ENCODE measurements at regions of chr3 and their contacts with region 1.

Region 1: GRCh38 chr3:171829841-171830517 is 13.2 kb upstream of the TMEM212 start:
- DNase-seq: no peak
- H3K4me3 Mint-ChIP-seq: no peak overlapping the region
- H3K27ac Mint-ChIP-seq: no peak overlapping the region
- H3K4me1 Mint-ChIP-seq: no peaks in the 10 kb centered on the region
- H3K27me3 Mint-ChIP-seq: peaks cover 12% of the 10 kb centered on the region

Region 2: DNA sequence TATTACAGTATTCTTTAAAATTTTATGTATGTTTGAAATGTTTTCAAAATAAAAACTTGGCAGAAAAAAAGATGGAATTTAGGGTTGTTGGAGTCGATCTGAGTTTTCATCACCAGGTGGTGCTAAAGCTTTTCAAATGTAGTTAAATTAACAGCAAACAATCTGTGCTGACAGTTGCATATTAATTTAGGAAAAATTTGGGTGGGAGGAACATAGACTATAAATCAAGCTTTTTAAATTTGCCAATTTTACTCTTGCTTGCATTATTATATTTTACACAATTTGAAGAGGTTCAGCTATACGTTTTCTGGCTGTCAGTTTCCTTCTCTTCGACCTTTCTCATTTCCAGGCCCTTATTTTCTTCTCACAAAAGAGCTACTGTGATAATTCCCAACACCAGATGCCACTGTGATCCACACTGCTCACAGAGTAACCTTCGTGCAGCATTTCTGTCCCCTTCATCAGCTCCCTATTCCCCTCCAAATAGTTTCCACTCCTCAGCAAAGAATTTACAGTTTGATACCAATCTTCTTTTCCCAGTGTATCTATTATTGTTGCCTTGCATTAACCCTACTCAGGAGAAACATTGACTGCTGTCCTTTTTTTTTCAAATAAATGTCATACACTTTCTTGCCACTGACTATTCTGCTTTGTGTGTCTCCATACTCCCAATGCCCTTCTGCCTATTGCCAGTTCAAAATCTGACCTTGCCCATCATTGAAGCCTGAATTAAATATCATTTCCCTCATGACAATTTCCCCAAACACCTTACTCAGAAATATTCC is 868.2 kb before region 1 on chr3:
- CTCF ChIA-PET with region 1: interaction called, 3 read pairs
- intact Hi-C with region 1: loop called (anchors 5 kb)
- DNase-seq: peak; percentile 21
- H3K4me3 Mint-ChIP-seq: no peak overlapping the region
- H3K27ac Mint-ChIP-seq: no peak overlapping the region
- H3K4me1 Mint-ChIP-seq: no peaks in the 10 kb centered on the region
- H3K27me3 Mint-ChIP-seq: peaks cover 3% of the 10 kb centered on the region

Region 3: DNA sequence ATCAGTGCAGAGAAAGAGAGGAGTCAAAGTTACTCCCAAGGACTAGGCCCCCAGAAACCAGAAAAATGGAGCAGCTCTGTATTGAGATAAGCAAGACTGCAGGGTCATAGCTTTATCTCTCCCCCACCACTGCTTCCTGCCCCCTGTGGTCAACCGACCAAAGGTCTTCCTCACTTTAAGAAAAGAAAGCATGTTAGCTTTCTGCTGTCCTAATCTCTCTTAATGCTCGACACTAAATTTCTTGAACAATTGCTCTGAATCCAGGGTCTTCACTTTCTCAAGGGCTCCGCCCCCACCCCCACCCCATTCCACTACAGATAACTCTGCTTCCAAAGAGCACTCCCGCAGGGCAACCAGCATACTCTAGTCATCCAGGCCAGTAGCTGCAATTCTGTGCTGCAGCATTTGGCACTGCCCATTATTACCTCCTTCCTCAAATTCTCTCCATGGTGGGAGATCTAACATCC is 401.6 kb before region 1 on chr3:
- CTCF ChIA-PET with region 1: no interaction called
- intact Hi-C with region 1: no loop called
- DNase-seq: no peak
- H3K4me3 Mint-ChIP-seq: no peak overlapping the region
- H3K27ac Mint-ChIP-seq: no peak overlapping the region
- H3K4me1 Mint-ChIP-seq: peaks cover 9% of the 10 kb centered on the region
- H3K27me3 Mint-ChIP-seq: no peaks in the 10 kb centered on the region

Region 4: DNA sequence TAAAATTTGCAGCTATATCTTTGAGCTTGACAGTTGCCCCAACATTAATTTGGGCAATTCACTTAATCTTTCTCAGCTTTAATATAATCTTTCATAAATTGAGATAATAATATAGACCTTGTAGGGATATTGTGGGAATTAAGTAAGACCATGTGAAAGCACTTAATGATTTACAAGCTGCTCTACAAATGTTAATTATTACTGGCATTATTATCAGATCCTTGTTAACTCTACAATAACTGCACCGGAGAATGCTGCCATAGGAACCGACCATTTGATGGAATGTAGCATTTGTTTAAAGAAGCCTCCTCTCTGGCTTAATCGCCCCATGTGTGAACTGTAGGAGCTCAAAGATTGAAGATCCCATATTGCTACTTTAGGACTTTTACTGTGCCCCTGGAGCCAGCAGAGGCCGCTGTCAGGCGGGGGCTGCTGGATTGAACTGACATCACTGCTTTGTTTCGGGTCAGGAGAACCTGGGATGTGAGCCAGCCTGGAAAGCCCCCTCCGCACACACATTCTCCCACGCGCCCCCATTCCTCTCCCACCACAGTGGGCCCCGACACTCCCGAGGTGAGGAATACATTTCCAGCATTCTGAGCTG is 215.6 kb before region 1 on chr3:
- CTCF ChIA-PET with region 1: interaction called, 11 read pairs
- intact Hi-C with region 1: loop called (anchors 2 kb)
- DNase-seq: peak; percentile 7
- H3K4me3 Mint-ChIP-seq: no peak overlapping the region
- H3K27ac Mint-ChIP-seq: no peak overlapping the region
- H3K4me1 Mint-ChIP-seq: no peaks in the 10 kb centered on the region
- H3K27me3 Mint-ChIP-seq: peaks cover 2% of the 10 kb centered on the region

Region 5: GRCh38 chr3:171646357-171647133 is 183.4 kb before region 1 on chr3:
- CTCF ChIA-PET with region 1: interaction called, 4 read pairs
- intact Hi-C with region 1: loop called (anchors 2 kb)
- DNase-seq: no peak
- H3K4me3 Mint-ChIP-seq: no peak overlapping the region
- H3K27ac Mint-ChIP-seq: no peak overlapping the region
- H3K4me1 Mint-ChIP-seq: no peaks in the 10 kb centered on the region
- H3K27me3 Mint-ChIP-seq: no peaks in the 10 kb centered on the region

Region 6: DNA sequence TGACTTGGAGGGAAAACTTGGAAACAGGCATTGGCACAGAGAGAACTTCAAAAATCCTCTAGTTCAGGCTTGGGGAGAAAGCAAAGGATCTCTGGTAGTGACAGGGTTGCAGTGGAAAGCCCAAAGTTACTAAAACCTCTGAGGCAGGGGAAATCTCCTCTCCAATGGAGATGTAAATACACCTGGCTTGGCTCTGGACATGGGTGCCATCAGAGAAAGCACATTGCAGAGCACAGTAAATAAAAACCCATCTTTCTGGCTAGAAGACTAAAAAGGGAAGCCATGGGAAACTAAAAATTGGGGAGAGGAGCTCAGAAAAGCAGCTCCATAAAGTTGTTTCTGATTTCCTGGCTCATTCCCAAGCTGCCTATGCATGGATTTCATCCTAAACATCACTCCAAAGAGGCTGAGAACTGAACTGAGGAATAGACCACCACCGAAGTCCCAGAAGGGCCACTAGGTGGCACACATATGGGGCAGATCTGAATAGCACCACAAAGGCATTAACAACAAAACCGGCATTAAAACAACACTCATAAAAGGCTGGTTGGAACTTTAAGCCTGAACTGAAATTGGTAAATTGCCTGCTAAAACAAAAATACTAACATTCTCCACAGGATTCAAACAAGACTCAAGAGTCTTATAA is 126.1 kb before region 1 on chr3:
- CTCF ChIA-PET with region 1: interaction called, 3 read pairs
- intact Hi-C with region 1: loop called (anchors 5 kb)
- DNase-seq: peak; percentile 14
- H3K4me3 Mint-ChIP-seq: no peak overlapping the region
- H3K27ac Mint-ChIP-seq: no peak overlapping the region
- H3K4me1 Mint-ChIP-seq: no peaks in the 10 kb centered on the region
- H3K27me3 Mint-ChIP-seq: peaks cover 8% of the 10 kb centered on the region

Region 7: GRCh38 chr3:172332256-172333041 is 502.5 kb after region 1 on chr3:
- CTCF ChIA-PET with region 1: no interaction called
- intact Hi-C with region 1: no loop called
- DNase-seq: peak; percentile 72
- H3K4me3 Mint-ChIP-seq: no peak overlapping the region
- H3K27ac Mint-ChIP-seq: no peak overlapping the region
- H3K4me1 Mint-ChIP-seq: peaks cover 4% of the 10 kb centered on the region
- H3K27me3 Mint-ChIP-seq: no peaks in the 10 kb centered on the region

Region 8: DNA sequence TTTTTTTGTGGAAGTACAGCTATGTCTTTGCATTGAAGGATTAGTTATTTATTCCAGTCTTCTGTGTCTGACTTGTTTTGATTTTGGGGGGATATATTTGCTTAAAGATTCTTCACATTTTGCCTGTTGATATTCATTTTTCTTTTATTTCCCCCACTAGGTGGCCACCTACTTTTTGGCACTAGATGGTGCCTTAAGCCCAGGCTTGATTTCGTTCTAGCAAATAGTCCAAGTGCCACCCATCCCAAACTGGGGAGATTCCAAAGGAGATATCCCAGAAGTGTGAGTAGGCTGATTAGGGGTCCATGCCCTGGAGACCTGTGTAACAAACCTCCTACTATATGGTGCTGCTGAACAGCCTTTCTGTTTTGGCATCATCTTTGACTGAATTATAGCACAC is 1391.0 kb after region 1 on chr3:
- CTCF ChIA-PET with region 1: no interaction called
- intact Hi-C with region 1: no loop called
- DNase-seq: no peak
- H3K4me3 Mint-ChIP-seq: no peak overlapping the region
- H3K27ac Mint-ChIP-seq: no peak overlapping the region
- H3K4me1 Mint-ChIP-seq: no peaks in the 10 kb centered on the region
- H3K27me3 Mint-ChIP-seq: no peaks in the 10 kb centered on the region

Measured in activated naive CD4-positive, alpha-beta T cell treated with anti-CD3 and anti-CD28 coated beads for 36 hours (primary cell).